Activated CD4-positive, alpha-beta memory T cell treated with anti-CD3 and anti-CD28 coated beads for 36 hours (primary cell): ENCODE measurements at regions of chr6 and their contacts with region 1.

Region 1: GRCh38 chr6:107847844-107848802 is 24.0 kb upstream of the SCML4 start:
- DNase-seq: peak; percentile 88
- H3K4me3 Mint-ChIP-seq: peak overlapping the region; percentile 75
- H3K27ac Mint-ChIP-seq: no peak overlapping the region
- H3K4me1 Mint-ChIP-seq: peaks cover 27% of the 10 kb centered on the region
- H3K27me3 Mint-ChIP-seq: no peaks in the 10 kb centered on the region

Region 2: GRCh38 chr6:107618672-107619071 is 229.5 kb before region 1 on chr6:
- CTCF ChIA-PET with region 1: no interaction called
- POLR2A ChIA-PET with region 1: no interaction called
- intact Hi-C with region 1: no loop called
- DNase-seq: peak; percentile 68
- H3K4me3 Mint-ChIP-seq: no peak overlapping the region
- H3K27ac Mint-ChIP-seq: no peak overlapping the region
- H3K4me1 Mint-ChIP-seq: peaks cover 13% of the 10 kb centered on the region
- H3K27me3 Mint-ChIP-seq: no peaks in the 10 kb centered on the region

Region 3: GRCh38 chr6:107704347-107705013 is 143.6 kb before region 1 on chr6:
- CTCF ChIA-PET with region 1: interaction called, 30 read pairs
- POLR2A ChIA-PET with region 1: no interaction called
- intact Hi-C with region 1: no loop called
- DNase-seq: no peak
- H3K4me3 Mint-ChIP-seq: no peak overlapping the region
- H3K27ac Mint-ChIP-seq: no peak overlapping the region
- H3K4me1 Mint-ChIP-seq: peaks cover 10% of the 10 kb centered on the region
- H3K27me3 Mint-ChIP-seq: no peaks in the 10 kb centered on the region

Region 4: DNA sequence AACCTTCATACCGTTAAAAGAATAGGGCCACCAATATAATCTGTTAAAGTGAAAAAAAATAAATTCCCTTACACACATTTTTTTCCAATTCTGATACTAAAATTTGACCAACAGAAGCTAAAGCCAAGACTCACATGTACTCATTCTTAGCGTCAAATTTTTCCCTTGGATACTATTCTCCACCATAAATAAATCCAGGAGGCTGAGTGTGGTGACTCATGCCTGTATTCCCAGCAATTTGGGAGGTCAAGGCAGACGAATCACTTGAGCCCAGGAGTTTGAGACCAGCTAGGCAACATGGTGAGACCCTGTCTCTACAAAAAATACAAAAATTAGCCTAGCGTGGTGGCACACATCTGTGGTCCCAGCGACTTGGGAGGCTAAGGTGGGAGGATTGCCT is 67.9 kb before region 1 on chr6:
- CTCF ChIA-PET with region 1: interaction called, 22 read pairs
- POLR2A ChIA-PET with region 1: no interaction called
- intact Hi-C with region 1: no loop called
- DNase-seq: no peak
- H3K4me3 Mint-ChIP-seq: no peak overlapping the region
- H3K27ac Mint-ChIP-seq: no peak overlapping the region
- H3K4me1 Mint-ChIP-seq: peaks cover 58% of the 10 kb centered on the region
- H3K27me3 Mint-ChIP-seq: no peaks in the 10 kb centered on the region

Region 5: GRCh38 chr6:107800564-107801164 is 47.5 kb before region 1 on chr6:
- CTCF ChIA-PET with region 1: interaction called, 17 read pairs
- POLR2A ChIA-PET with region 1: no interaction called
- intact Hi-C with region 1: loop called (anchors 1 kb)
- DNase-seq: no peak
- H3K4me3 Mint-ChIP-seq: no peak overlapping the region
- H3K27ac Mint-ChIP-seq: no peak overlapping the region
- H3K4me1 Mint-ChIP-seq: peaks cover 66% of the 10 kb centered on the region
- H3K27me3 Mint-ChIP-seq: no peaks in the 10 kb centered on the region

Region 6: DNA sequence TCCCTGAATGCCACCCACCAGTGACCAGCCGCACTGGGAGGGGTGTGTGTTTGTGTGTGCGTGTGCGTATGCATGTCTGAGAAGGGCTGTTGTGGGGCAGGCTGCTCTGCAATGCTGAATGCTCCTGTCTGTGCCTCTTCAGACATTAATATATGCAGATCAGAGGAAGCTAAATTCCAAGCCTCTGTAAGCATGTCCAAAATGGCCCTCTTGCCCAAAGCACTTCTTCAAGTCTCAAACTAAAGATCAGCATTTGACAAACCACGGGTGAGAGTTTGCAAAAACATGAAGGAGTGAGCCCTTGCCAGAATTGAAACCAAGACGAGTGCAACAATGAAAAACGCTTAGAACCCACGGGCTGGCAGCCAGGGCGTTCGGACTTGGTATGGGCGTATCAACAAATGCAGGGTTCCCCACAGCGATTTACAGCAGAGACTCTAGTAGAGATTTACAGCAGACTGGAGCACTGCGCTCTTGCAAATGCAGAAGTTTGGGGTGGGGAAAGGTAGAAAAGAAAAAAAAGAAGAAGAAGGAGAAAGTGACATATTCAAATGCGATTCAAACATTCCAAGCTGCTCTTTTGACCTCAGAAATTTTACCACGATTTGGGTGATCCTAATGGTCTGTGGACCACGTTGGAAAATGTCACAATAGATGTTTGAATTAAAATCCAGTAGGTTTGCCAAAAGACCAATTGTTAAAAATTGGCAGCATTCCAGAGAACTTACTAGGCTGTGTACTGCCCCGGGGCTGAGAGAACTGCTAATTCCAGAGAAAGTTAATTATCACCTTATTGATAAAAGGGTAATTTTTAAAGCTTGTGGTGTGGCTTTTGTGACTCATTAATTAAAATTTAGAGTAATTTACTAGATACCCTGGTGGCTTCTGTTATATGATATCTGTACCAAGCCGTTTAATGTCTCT is 27.5 kb before region 1 on chr6:
- CTCF ChIA-PET with region 1: interaction called, 55 read pairs
- POLR2A ChIA-PET with region 1: interaction called, 6 read pairs
- intact Hi-C with region 1: loop called (anchors 1 kb)
- DNase-seq: peak; percentile 45
- H3K4me3 Mint-ChIP-seq: peak overlapping the region; percentile 86
- H3K27ac Mint-ChIP-seq: peak overlapping the region; percentile 80
- H3K4me1 Mint-ChIP-seq: peaks cover 83% of the 10 kb centered on the region
- H3K27me3 Mint-ChIP-seq: no peaks in the 10 kb centered on the region